ENCODE measurements at regions of chr3 and their contacts with region 1.

Region 1: GRCh38 chr3:131381444-131382291 is at the start of gene NUDT16:
- DNase-seq: peak; percentile 99
- ATAC-seq: peak; percentile 99
- H3K4me3 Mint-ChIP-seq: peak within 1 kb of the TSS; percentile 93
- H3K27ac Mint-ChIP-seq: peak within 1 kb of the TSS; percentile 92
- H3K4me1 Mint-ChIP-seq: peaks cover 29% of the 10 kb centered on the region
- H3K27me3 Mint-ChIP-seq: no peaks in the 10 kb centered on the region
- total RNA-seq, gene NUDT16: 9.8 to 11.5 TPM

Region 2: DNA sequence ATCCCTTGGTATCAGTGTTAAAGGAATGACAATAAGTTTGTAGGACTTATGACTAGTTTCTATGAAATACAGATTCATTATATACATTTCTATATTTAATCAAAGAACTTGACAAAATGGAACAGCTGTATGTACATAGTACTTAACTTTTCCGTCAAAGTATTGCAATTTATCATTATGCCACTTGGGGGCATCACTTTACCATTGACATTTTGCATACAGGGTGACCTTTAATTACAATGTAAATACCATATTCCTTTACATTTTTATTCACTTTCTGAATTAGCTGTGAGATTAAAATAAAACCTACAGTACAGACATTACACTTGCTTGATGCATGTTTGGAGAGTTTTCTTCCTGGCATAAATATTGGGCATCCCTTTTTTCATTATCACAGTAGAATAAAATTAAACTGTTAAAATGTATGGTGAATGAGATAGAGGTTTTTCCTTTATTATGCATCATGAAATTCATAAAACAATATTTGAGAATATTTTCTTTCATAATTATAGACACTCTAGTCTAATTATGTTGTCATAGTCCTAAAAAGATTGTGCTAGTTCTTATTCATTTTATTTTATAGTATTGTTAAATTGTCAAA is 348.1 kb before region 1 on chr3:
- CTCF ChIA-PET with region 1: interaction called, 11 read pairs
- DNase-seq: no peak
- ATAC-seq: peak; percentile 70
- H3K4me3 Mint-ChIP-seq: no peak overlapping the region
- H3K27ac Mint-ChIP-seq: no peak overlapping the region
- H3K4me1 Mint-ChIP-seq: peaks cover 3% of the 10 kb centered on the region
- H3K27me3 Mint-ChIP-seq: no peaks in the 10 kb centered on the region